Vagina (tissue), 2 donors: ENCODE measurements at regions of chr9 and their contacts with region 1.

Region 1: DNA sequence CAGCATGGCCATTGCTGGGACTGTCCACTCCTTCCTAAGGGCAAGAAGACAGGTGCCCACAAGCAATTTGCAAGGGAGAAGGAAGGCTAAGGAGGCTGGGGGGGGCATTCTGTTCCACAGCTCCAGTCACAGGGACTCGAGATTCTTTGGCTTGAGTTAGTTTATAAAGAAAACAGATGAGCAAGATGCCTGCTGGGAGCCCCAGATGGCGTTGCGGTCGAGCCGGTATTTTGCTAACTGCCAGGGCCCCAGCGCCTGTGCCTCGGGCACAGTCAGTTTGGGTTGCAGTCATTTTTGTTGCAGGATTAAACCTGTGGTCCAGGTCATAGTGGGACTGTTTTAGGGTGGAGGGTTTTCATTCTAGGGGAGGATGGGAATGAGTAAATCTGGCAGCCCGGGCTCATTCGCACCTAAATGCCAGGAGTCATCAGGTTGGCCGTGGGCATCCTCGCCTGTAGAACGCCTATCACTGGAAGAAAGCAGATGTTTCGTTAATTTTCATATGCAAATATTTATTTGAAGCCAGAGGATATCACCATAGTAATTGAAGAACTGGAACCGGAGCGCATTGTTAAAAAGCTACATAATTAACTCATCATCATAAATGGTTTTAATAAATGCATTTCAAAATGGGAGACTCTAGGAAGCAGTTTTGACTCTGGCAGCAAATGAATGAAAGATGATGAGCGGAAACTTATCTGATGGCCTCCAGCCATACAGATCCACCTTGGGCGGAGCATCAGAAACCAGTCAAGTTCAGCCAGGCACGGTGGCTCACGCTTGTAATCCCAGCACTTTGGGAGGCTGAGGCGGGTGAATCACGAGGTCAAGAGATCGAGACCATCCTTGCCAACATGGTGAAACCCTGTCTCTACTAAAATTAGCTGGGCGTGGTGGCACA is 87.1 kb upstream of the FCN2 start:
- DNase-seq: no peak
- H3K4me3 ChIP-seq: no peak overlapping the region
- H3K27ac ChIP-seq: no peak overlapping the region
- H3K4me1 ChIP-seq: no peaks in the 10 kb centered on the region
- H3K27me3 ChIP-seq: no peaks in the 10 kb centered on the region
- CTCF ChIP-seq: no peak
- POLR2A ChIP-seq: no peak

Region 2: DNA sequence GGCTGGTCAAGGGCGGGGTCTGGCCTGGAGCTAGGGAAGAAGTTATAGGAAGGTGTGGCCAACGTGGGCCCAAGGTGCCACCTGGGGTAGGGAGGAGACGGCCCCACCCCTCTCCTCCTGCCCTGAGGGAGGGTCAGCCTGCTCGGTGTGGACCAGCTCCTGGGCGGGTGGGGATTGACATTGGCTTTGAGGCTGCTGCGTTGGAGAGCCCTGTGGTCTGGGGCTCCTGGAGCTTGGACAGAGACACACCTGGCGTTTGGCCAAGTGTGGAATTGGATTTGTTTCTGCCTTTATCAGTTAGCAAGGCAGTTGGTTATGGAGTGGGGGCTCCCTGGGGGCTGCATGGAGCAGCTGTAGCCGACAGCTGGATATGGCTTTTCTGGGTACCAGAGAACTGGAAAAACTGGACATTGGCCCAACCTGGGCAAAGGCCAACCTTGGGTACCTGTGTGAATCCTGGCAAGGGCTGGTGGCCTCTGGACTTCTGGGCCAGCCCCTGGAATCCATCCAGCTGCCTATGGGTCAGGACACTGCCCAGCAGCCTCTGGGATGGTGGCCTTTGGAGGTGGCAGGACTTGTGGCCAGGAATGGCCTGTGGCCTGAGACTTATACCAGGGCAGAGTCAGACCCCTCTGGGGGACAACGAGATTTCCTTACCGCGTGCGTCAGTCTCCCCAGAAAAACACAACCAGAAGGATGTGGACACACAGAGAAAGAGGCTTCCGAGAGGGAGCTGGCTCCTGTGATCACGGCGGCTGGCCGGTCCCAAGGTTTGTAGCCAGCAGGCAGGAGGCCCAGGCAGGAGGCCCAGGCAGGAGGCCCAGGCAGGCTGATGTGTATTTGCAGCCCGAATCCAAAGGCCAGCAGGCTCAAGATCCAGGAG is 610.5 kb after region 1 on chr9:
- intact Hi-C with region 1: loop called (anchors 10 kb)
- DNase-seq: no peak
- H3K4me3 ChIP-seq: no peak overlapping the region
- H3K27ac ChIP-seq: no peak overlapping the region
- H3K4me1 ChIP-seq: no peaks in the 10 kb centered on the region
- H3K27me3 ChIP-seq: no peaks in the 10 kb centered on the region
- CTCF ChIP-seq: no peak
- POLR2A ChIP-seq: no peak